ENCODE measurements at regions of chr20 and their contacts with region 1.

Region 1: GRCh38 chr20:6148073-6148472 is 25.2 kb upstream of the FERMT1 start:
- DNase-seq: no peak
- ATAC-seq: no peak
- H3K4me3 Mint-ChIP-seq: no peak overlapping the region
- H3K27ac Mint-ChIP-seq: no peak overlapping the region
- H3K4me1 Mint-ChIP-seq: no peaks in the 10 kb centered on the region
- H3K27me3 Mint-ChIP-seq: peaks cover 13% of the 10 kb centered on the region

Region 2: DNA sequence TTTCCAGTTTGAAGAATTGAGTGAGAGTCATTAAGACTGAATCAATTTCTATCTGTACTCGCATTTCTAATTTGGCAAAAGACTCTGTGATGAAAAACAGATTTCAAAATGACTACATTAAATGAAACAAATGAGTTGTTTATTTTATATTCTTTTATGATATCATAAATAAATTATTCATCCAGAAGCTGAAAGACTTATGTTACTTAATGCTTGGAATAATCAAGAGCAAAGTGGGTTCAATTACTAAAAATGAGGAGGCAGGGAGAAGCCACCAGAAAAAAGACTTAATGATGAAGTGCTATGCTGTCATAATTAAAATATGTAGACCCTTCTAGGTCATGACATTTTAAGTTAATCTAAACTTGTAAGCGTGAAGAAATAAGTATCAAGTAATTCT is 105.3 kb after region 1 on chr20:
- CTCF ChIA-PET with region 1: no interaction called
- POLR2A ChIA-PET with region 1: no interaction called
- intact Hi-C with region 1: no loop called
- DNase-seq: no peak
- ATAC-seq: no peak
- H3K4me3 Mint-ChIP-seq: no peak overlapping the region
- H3K27ac Mint-ChIP-seq: no peak overlapping the region
- H3K4me1 Mint-ChIP-seq: no peaks in the 10 kb centered on the region
- H3K27me3 Mint-ChIP-seq: no peaks in the 10 kb centered on the region

Region 3: GRCh38 chr20:6692568-6693173 is 544.6 kb after region 1 on chr20:
- CTCF ChIA-PET with region 1: no interaction called
- POLR2A ChIA-PET with region 1: no interaction called
- intact Hi-C with region 1: loop called in 1 of 2 experiments (anchors 5 kb)
- DNase-seq: no peak
- ATAC-seq: no peak
- H3K4me3 Mint-ChIP-seq: no peak overlapping the region
- H3K27ac Mint-ChIP-seq: no peak overlapping the region
- H3K4me1 Mint-ChIP-seq: no peaks in the 10 kb centered on the region
- H3K27me3 Mint-ChIP-seq: no peaks in the 10 kb centered on the region